Calu3 (cell line): ENCODE measurements at regions of chr11 and their contacts with region 1.

Region 1: DNA sequence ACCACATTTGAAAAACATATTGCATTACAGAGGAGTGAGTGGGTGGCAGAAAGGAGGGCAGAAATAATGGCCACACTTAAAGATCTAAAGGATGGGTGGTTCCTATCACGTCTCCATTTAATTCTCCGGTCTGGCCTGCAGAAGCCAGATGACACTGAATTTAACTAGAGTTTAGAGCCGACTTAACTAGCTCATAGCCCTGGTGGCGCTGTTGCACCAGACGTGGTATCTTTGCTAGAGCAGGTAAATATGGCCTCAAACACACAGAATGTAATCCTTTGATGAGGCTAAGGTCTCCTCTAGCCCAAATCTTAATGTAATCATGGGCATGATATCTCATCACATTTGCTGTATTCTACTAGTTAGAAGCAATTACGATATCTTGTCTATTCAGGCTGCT is 51.5 kb upstream of the GAL start:
- DNase-seq: peak; percentile 68
- H3K4me3 Mint-ChIP-seq: no peak overlapping the region
- H3K27ac Mint-ChIP-seq: no peak overlapping the region
- H3K4me1 Mint-ChIP-seq: no peaks in the 10 kb centered on the region
- H3K27me3 Mint-ChIP-seq: peaks cover 42% of the 10 kb centered on the region
- CTCF ChIP-seq: peak; percentile 30

Region 2: GRCh38 chr11:68651208-68651984 is 18.6 kb after region 1 on chr11:
- CTCF ChIA-PET with region 1: no interaction called
- intact Hi-C with region 1: no loop called
- DNase-seq: no peak
- H3K4me3 Mint-ChIP-seq: no peak overlapping the region
- H3K27ac Mint-ChIP-seq: no peak overlapping the region
- H3K4me1 Mint-ChIP-seq: no peaks in the 10 kb centered on the region
- H3K27me3 Mint-ChIP-seq: peaks cover 51% of the 10 kb centered on the region
- CTCF ChIP-seq: no peak

Region 3: GRCh38 chr11:69088676-69089146 is 455.9 kb after region 1 on chr11:
- CTCF ChIA-PET with region 1: no interaction called
- intact Hi-C with region 1: loop called (anchors 5 kb)
- DNase-seq: peak; percentile 83
- H3K4me3 Mint-ChIP-seq: no peak overlapping the region
- H3K27ac Mint-ChIP-seq: no peak overlapping the region
- H3K4me1 Mint-ChIP-seq: peaks cover 13% of the 10 kb centered on the region
- H3K27me3 Mint-ChIP-seq: no peaks in the 10 kb centered on the region
- CTCF ChIP-seq: peak; percentile 74